Right ventricle myocardium superior (tissue), 1 donor: ENCODE measurements at regions of chr7 and their contacts with region 1.

Region 1: GRCh38 chr7:107471292-107472070 is 1.6 kb downstream of the GPR22 start:
- DNase-seq: no peak
- ATAC-seq: peak; percentile 57

Region 2: DNA sequence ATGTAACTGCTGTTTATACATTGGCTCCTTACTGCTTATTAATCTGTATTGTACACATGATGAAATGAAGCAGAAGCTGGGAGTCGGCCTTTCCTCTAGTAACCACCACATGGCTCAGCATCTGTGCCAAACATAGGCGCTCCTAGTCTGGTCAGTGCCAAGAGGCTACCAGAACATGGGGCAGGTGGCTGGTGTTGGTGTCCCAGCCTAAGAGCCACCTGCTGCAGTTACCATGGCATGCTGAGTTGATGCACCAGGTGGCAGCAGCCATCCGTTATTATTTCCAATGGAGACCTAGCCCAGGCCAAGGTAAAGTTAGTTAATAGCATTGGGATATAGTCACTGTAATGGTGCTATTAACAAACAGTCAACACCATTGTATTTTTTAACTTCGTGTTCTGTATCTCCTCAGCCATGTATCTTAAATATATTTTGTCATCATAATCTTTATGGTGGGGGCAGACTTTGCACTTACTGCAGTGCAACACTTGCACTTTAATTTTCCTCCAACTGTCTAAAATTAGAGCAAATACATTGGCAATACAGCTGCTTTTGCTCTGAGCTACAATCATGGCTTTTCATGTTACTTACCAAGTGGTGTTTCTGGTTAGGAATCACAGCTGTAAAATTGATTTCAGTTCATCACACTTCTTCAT is 269.6 kb before region 1 on chr7:
- intact Hi-C with region 1: loop called (anchors 5 kb)
- DNase-seq: peak; percentile 68
- ATAC-seq: peak; percentile 90

Region 3: GRCh38 chr7:108146070-108146837 is 674.8 kb after region 1 on chr7:
- intact Hi-C with region 1: no loop called
- DNase-seq: no peak
- ATAC-seq: peak; percentile 94